Heart left ventricle (tissue), 16 donors: ENCODE measurements at regions of chr6 and their contacts with region 1.

Region 1: DNA sequence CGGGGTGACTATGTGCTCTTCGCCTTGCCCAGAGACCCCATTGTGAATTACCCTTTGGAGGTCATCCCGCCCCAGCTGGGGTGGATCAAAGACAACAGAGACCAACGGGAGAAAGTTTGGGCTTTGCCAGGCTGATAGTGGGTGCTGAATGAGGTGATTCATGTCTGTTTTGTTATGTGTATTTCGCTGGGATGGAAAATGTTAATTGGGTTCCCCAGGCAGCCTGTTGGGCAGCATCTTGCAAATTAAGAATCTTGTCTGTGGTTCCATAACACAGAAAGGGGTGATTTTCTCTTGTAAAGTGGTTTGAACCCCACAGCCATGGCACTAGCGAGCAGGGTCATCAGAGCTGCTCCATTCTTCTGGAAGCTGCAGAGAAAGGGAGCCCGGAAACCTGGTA is 63.1 kb upstream of the UNC93A start:
- DNase-seq: no peak
- ATAC-seq: no peak
- H3K4me3 ChIP-seq: no peak overlapping the region
- H3K27ac ChIP-seq: no peak overlapping the region
- H3K4me1 ChIP-seq: no peaks in the 10 kb centered on the region
- H3K27me3 ChIP-seq: peaks cover 0 to 47% (median 5%) of the 10 kb centered on the region in 9 donors
- CTCF ChIP-seq: no peak
- POLR2A ChIP-seq: no peak

Region 2: DNA sequence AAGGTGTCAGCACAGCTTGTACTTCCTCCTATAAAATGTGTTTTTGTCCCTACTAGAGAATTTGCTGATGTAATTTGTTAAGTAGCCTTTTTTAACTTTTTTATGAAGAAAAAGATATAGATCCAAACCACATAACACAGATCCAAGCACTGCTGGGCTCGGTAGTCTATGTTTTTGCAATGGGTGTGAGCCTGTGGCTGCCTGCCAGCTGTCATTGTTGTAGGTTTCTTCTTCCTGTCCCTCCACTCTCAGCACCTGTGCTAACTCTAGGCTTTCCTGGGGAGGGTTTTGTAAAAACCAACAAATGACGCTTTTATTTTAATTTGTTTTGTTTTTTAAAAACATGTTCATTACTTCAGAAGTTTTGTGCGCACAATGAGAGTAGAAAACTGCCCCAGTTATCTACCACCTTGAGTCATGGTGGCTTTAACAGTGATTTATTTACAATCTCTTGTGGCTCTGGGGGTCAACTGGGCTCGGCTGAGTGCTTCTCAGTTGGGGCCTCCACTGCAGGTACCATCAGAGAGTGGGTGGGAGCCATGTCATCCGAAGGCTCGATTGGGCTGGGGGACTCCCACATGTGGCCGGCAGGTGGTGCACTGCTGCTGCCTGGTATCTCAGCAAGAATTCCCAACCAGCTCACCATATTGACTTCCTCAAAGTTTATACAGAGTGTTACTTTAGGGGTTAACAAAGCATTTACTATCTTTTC is 108.2 kb before region 1 on chr6:
- intact Hi-C with region 1: no loop called
- DNase-seq: no peak
- ATAC-seq: no peak
- H3K4me3 ChIP-seq: no peak overlapping the region
- H3K27ac ChIP-seq: peak overlapping the region in 1 of 12 donors; percentile 0
- H3K4me1 ChIP-seq: peaks cover 0 to 12% (median 0%) of the 10 kb centered on the region in 12 donors
- H3K27me3 ChIP-seq: peaks cover 0 to 43% (median 4%) of the 10 kb centered on the region in 9 donors
- CTCF ChIP-seq: no peak
- POLR2A ChIP-seq: no peak

Region 3: DNA sequence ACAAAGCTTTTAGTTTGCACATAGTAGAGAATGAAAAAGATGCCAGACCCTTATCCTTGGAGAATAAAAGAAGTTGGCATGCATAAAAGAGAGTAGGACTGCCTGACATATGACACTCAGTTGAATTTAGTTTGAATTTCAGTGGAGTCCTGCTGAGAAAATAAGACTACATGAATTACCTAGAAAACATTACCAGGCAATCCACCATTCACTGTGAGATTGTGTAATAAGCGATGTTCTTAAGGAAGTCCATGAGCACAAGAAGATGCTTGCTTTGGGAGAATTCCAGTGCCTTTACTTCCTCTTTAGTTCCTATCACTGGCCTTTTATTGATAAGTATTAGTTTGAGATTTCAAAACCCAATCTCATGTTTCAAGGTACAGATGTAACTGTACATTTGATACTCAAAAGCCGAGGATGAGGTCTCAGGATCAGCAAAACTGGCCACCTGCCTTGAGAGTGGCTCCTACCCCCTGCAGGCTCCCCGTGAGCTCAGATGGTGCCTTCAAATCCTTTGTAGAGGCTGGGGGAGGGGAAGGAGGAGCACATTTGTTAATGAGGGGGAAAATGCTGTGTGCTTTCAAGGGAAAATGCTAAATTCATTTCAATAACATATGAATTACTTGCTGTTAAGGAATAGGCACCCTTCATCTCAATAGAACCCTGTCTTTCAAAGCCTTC is 51.9 kb after region 1 on chr6:
- intact Hi-C with region 1: loop called in 6 of 10 experiments (anchors 5 to 10 kb)
- DNase-seq: no peak
- ATAC-seq: no peak
- H3K4me3 ChIP-seq: no peak overlapping the region
- H3K27ac ChIP-seq: no peak overlapping the region
- H3K4me1 ChIP-seq: no peaks in the 10 kb centered on the region
- H3K27me3 ChIP-seq: peaks cover 0 to 22% (median 3%) of the 10 kb centered on the region in 9 donors
- CTCF ChIP-seq: no peak
- POLR2A ChIP-seq: no peak